ENCODE measurements at regions of chr10 and their contacts with region 1.

Region 1: GRCh38 chr10:101060036-101060950 is 1.5 kb upstream of the KAZALD1 start:
- DNase-seq: peak; percentile 73 to 92 (median 84)
- H3K4me3 ChIP-seq: peak overlapping the region; percentile 59 to 100 (median 83)
- H3K27ac ChIP-seq: peak overlapping the region; percentile 52 to 99 (median 94)
- H3K27me3 ChIP-seq: peaks cover 0 to 36% (median 20%) of the 10 kb centered on the region in 45 donors
- CTCF ChIP-seq: peak; percentile 68 to 92 (median 86)

Region 2: DNA sequence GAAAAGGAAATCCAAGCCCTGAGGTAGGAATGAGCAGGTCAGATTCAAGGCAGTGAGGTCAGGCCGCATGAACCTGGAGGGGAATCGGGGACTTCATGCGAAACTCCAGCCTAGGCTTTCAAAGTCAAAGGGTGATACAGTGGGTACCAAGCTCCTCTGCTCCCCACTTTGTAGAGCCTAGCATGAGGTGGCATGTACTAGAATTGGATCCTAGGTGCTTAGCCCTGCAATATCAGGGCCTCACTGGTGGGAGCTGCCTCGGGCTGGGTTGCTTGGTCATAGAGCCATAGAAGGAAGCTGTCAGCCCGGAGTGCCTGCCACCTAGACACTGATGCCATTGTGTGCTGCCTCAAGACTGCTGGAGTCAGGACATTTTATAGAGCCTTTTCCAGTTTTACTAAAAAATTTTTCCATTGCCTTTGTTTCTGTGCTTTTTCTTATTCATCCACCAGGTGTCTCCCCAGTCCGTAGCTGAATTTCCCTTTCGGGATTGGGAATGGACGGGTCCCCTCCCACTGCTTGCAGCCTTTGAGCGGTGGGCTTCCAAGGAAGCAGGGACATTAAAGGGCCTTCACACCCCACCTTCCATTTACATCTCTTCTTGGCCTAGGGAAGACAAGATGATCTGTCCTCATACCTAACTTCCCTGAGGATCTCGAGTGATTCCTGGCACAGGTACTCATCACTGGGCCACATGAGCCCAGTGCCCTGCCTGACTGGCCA is 66.1 kb before region 1 on chr10:
- intact Hi-C with region 1: loop called in 1 of 2 experiments (anchors 2 kb)
- DNase-seq: peak in 1 of 10 donors; percentile 46
- H3K4me3 ChIP-seq: no peak overlapping the region
- H3K27ac ChIP-seq: peak overlapping the region; percentile 43 to 100 (median 94)
- H3K27me3 ChIP-seq: no peaks in the 10 kb centered on the region
- CTCF ChIP-seq: peak; percentile 62 to 96 (median 85)